Activated CD4-positive, alpha-beta T cell treated with anti-CD3 and anti-CD28 coated beads, Interleukin-2, amount 10 ng/mL, durations not matched to agents 24 days and 14 days (primary cell): ENCODE measurements at regions of chr4 and their contacts with region 1.

Region 1: GRCh38 chr4:142549726-142550463 is 296.2 kb downstream of the INPP4B start:
- DNase-seq: no peak
- H3K4me3 Mint-ChIP-seq: no peak overlapping the region
- H3K27ac Mint-ChIP-seq: peak overlapping the region; percentile 57
- H3K4me1 Mint-ChIP-seq: peaks cover 44% of the 10 kb centered on the region
- H3K27me3 Mint-ChIP-seq: no peaks in the 10 kb centered on the region

Region 2: GRCh38 chr4:142339053-142339452 is 210.8 kb before region 1 on chr4:
- intact Hi-C with region 1: no loop called
- DNase-seq: no peak
- H3K4me3 Mint-ChIP-seq: no peak overlapping the region
- H3K27ac Mint-ChIP-seq: no peak overlapping the region
- H3K4me1 Mint-ChIP-seq: peaks cover 3% of the 10 kb centered on the region
- H3K27me3 Mint-ChIP-seq: no peaks in the 10 kb centered on the region

Region 3: DNA sequence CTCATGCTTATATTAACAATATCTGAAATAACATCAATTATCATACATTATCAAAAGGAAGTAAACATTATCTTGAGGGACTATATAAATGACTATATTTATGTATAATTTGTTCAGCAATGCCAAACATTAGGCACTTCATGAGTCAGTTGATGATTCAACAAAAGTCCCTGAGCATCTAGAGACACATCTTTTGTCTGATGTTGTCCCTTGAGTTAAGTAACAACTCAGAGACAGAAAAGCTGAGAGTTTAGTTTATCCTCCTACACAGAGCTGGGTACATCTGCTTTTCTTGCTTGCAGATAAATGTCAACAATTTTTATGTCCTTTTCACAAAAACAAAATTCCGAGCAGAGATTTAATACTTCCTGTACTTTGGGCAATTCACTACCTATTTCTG is 14.9 kb before region 1 on chr4:
- intact Hi-C with region 1: loop called (anchors 2 kb)
- DNase-seq: no peak
- H3K4me3 Mint-ChIP-seq: no peak overlapping the region
- H3K27ac Mint-ChIP-seq: no peak overlapping the region
- H3K4me1 Mint-ChIP-seq: peaks cover 11% of the 10 kb centered on the region
- H3K27me3 Mint-ChIP-seq: no peaks in the 10 kb centered on the region

Region 4: DNA sequence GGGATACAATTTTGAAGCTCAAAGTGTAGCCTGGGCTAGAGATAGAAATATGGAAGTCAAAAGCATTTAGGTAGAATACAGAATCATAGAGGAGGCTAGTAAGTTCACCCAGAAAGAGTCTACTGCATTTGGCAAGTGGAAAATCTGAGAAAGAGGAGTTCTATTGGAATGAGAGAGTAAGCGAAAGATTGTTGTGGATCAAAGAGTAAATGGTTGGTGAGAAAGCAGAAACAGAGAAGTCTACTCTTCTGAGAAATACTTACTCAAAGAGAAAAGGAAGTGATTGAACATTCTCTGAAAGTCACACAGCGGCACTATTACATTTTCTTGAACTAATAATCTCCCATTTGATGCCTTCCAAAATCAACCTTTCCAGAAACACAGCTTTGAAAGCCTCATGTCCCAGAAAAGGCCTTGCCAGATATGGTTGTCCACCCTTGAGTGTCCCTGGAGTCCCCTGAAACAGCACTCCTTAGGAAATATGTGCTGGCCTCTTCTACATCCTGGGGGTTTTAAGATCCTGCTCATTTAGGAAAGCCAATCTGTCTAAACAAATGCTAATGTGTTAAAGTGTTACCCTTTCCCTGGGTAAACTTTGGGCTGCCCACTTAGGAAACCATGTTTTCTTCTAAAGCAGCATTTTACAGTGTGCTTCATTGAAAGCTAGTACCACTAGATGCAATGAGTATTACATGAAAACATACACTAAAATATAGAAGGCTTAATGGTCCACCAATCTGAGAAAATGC is 163.6 kb after region 1 on chr4:
- intact Hi-C with region 1: loop called (anchors 2 kb)
- DNase-seq: no peak
- H3K4me3 Mint-ChIP-seq: peak overlapping the region; percentile 44
- H3K27ac Mint-ChIP-seq: peak overlapping the region; percentile 57
- H3K4me1 Mint-ChIP-seq: peaks cover 41% of the 10 kb centered on the region
- H3K27me3 Mint-ChIP-seq: no peaks in the 10 kb centered on the region

Region 5: GRCh38 chr4:142824368-142824767 is 274.5 kb after region 1 on chr4:
- intact Hi-C with region 1: loop called (anchors 5 kb)
- DNase-seq: no peak
- H3K4me3 Mint-ChIP-seq: no peak overlapping the region
- H3K27ac Mint-ChIP-seq: no peak overlapping the region
- H3K4me1 Mint-ChIP-seq: peaks cover 6% of the 10 kb centered on the region
- H3K27me3 Mint-ChIP-seq: no peaks in the 10 kb centered on the region

Region 6: DNA sequence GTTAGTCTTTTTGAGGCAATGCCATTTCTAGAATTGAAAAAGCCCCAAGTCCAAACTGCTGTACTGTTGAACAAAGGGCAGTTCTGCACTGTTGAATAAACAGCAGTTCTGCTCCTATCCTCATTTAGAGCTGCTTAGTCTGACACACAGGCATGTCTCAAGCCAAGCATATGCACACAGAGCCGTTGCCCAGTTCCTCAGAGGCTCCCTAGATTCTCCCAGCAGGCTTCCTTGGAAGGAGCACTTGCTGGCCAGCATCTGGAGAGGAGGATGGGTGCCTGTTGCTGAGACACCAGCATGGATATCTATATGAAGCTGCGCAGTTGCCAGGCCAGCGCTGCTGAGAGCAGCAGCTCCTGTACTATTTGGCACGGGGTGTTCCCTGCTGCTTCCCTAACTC is 496.6 kb after region 1 on chr4:
- intact Hi-C with region 1: no loop called
- DNase-seq: no peak
- H3K4me3 Mint-ChIP-seq: no peak overlapping the region
- H3K27ac Mint-ChIP-seq: no peak overlapping the region
- H3K4me1 Mint-ChIP-seq: no peaks in the 10 kb centered on the region
- H3K27me3 Mint-ChIP-seq: no peaks in the 10 kb centered on the region